Mammary epithelial cell (primary cell): ENCODE measurements at regions of chr1 and their contacts with region 1.

Region 1: GRCh38 chr1:216310776-216311175 is 112.5 kb downstream of the USH2A start:
- DNase-seq: peak; percentile 44
- H3K4me3 ChIP-seq: no peak overlapping the region
- H3K27ac ChIP-seq: no peak overlapping the region
- H3K4me1 ChIP-seq: peaks cover 5% of the 10 kb centered on the region
- H3K27me3 ChIP-seq: peaks cover 3% of the 10 kb centered on the region
- CTCF ChIP-seq: peak; percentile 78 to 82

Region 2: DNA sequence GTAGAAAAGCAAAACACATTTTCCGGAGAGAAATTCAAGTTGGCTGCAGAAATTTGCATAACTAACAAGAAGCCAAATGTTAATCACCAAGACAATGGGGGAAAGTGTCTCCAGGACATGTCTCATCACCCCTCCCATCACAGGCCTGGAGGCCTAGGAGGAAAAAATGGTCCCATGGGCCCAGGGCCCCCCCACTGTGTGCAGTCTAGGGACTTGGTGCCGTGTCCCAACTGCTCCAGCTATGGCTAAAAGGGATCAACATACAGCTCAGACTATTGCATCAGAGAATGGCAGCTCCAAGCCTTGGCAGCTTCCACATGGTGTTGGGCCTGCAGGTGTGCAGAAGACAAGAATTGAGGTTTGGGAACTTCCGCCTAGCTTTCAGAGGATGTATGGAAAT is 25.7 kb before region 1 on chr1:
- CTCF ChIA-PET with region 1: no interaction called
- dilution Hi-C with region 1: no loop called
- in situ Hi-C with region 1: no loop called
- intact Hi-C with region 1: no loop called
- DNase-seq: no peak
- H3K4me3 ChIP-seq: no peak overlapping the region
- H3K27ac ChIP-seq: no peak overlapping the region
- H3K4me1 ChIP-seq: no peaks in the 10 kb centered on the region
- H3K27me3 ChIP-seq: no peaks in the 10 kb centered on the region
- CTCF ChIP-seq: no peak

Region 3: DNA sequence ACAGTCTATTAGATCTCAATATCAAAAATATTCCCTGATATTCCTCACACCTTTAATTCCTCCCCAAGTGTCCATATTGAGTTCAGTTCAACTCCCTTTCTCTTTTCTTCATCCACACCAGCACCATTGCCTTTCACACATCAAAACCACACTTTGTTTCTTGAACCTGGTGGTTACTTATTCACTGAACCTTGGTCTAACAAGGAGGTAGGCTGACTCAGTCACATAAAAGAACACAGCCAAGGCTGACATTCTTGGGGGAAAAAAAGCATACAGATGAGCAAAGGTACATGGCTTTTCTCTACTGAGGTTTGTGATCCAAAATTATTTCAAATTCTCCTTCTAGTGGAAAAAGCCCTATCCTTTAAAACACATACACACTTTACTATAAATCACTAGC is 244.2 kb after region 1 on chr1:
- CTCF ChIA-PET with region 1: interaction called, 13 read pairs
- dilution Hi-C with region 1: no loop called
- in situ Hi-C with region 1: no loop called
- intact Hi-C with region 1: no loop called
- DNase-seq: no peak
- H3K4me3 ChIP-seq: no peak overlapping the region
- H3K27ac ChIP-seq: no peak overlapping the region
- H3K4me1 ChIP-seq: no peaks in the 10 kb centered on the region
- H3K27me3 ChIP-seq: no peaks in the 10 kb centered on the region
- CTCF ChIP-seq: no peak

Region 4: DNA sequence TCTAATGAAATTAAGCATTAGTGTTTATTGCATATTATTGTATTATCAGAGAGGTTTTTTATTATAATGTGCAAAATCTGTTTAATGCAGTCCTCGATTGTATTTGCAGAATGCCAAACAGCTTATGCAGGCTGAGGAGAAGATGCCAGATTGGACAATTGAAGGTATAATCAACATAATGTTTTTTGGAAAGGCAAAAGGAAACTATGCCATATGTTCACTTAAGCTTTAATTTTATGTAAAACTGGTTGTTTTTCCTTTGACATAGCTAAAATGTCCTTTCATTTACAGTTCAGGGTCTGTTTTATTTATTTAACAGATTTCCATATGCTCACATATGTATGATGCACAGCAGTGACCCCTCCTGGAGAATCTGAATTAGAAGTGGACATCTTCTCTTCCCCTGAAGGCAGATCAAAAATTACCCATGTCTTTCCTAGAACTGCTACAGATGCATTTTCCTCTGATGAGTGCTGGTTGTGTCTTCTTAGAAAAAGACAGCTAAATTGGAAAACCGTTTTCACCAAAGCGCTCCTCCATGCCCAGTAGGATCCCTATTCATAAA is 255.9 kb after region 1 on chr1:
- CTCF ChIA-PET with region 1: no interaction called
- dilution Hi-C with region 1: no loop called
- in situ Hi-C with region 1: no loop called
- intact Hi-C with region 1: loop called (anchors 1 kb)
- DNase-seq: peak; percentile 12
- H3K4me3 ChIP-seq: no peak overlapping the region
- H3K27ac ChIP-seq: no peak overlapping the region
- H3K4me1 ChIP-seq: no peaks in the 10 kb centered on the region
- H3K27me3 ChIP-seq: peaks cover 2% of the 10 kb centered on the region
- CTCF ChIP-seq: peak; percentile 13 to 43

Region 5: DNA sequence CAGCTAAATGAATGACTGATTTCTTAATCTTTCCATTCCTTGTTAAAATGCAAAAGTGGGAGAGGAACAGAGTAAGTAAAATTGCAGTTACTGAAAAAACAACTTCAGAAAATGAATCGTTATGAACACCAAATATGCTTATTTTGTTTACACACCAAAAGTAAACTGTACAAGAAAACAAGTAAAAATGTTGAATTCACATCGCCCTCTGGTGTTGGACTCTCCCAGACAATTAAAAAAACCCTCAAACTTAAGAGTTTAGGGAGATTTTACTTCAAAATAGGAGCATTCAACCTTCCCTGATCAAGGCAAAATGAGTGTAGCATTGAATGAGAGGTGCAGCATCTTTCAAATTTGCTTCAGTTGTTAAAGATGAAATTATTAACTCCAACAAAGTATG is 431.8 kb after region 1 on chr1:
- CTCF ChIA-PET with region 1: no interaction called
- dilution Hi-C with region 1: no loop called
- in situ Hi-C with region 1: loop called in 1 of 2 experiments (anchors 25 kb)
- intact Hi-C with region 1: loop called (anchors 1 kb)
- DNase-seq: no peak
- H3K4me3 ChIP-seq: no peak overlapping the region
- H3K27ac ChIP-seq: no peak overlapping the region
- H3K4me1 ChIP-seq: no peaks in the 10 kb centered on the region
- H3K27me3 ChIP-seq: no peaks in the 10 kb centered on the region
- CTCF ChIP-seq: peak in 1 of 2 donors; percentile 44

Region 6: GRCh38 chr1:216914974-216915373 is 604.2 kb after region 1 on chr1:
- CTCF ChIA-PET with region 1: no interaction called
- dilution Hi-C with region 1: no loop called
- in situ Hi-C with region 1: no loop called
- intact Hi-C with region 1: no loop called
- DNase-seq: peak; percentile 46
- H3K4me3 ChIP-seq: no peak overlapping the region
- H3K27ac ChIP-seq: no peak overlapping the region
- H3K4me1 ChIP-seq: peaks cover 7% of the 10 kb centered on the region
- H3K27me3 ChIP-seq: no peaks in the 10 kb centered on the region
- CTCF ChIP-seq: no peak